Activated CD4-positive, alpha-beta memory T cell treated with anti-CD3 and anti-CD28 coated beads, Interleukin-2, amount 10 ng/mL, durations not matched to agents 7 days and 5 days (primary cell): ENCODE measurements at regions of chr19 and their contacts with region 1.

Region 1: DNA sequence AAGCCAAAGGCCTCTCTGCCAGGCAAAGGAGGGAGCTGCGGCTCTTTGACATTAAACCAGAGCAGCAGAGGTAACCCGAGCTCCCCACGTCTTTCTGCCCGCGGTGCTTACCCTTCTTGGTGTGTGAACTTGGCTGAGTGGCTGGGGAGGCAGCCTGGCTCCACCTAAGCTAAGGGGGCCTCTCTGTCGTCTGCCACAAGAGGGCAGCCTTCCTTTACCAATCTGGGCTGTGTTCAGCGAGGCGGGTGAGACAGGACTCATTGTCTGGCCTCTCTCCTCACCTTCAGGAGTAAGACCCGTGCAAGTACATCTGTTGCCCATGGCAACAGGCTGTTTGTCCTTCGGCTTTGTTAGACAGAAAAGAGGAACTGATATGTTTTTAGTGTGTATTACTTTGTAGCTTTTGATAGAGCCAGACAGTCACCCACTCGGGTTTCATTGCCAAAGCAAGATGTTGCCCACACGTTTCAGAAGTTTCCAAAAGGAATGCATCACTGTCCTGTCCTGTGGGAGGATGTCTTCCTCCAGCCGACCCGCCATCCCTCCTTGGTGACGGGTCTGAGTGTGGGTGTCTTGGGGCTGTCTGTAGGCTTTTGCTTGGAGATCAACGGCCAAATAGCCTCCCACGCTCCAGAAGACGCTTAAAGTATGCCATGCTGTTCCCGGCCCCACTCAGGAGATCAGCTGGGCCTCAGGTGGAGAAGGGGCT is 4.6 kb downstream of the POP4 start:
- DNase-seq: peak; percentile 88
- H3K4me3 Mint-ChIP-seq: no peak overlapping the region
- H3K27ac Mint-ChIP-seq: peak overlapping the region; percentile 9
- H3K4me1 Mint-ChIP-seq: peaks cover 37% of the 10 kb centered on the region
- H3K27me3 Mint-ChIP-seq: no peaks in the 10 kb centered on the region

Region 2: GRCh38 chr19:29520390-29520789 is 90.3 kb before region 1 on chr19:
- CTCF ChIA-PET with region 1: no interaction called
- POLR2A ChIA-PET with region 1: no interaction called
- DNase-seq: no peak
- H3K4me3 Mint-ChIP-seq: no peak overlapping the region
- H3K27ac Mint-ChIP-seq: no peak overlapping the region
- H3K4me1 Mint-ChIP-seq: peaks cover 2% of the 10 kb centered on the region
- H3K27me3 Mint-ChIP-seq: peaks cover 32% of the 10 kb centered on the region

Region 3: GRCh38 chr19:29596080-29596727 is 14.5 kb before region 1 on chr19:
- CTCF ChIA-PET with region 1: interaction called, 4 read pairs
- POLR2A ChIA-PET with region 1: interaction called, 10 read pairs
- DNase-seq: no peak
- H3K4me3 Mint-ChIP-seq: no peak overlapping the region
- H3K27ac Mint-ChIP-seq: no peak overlapping the region
- H3K4me1 Mint-ChIP-seq: no peaks in the 10 kb centered on the region
- H3K27me3 Mint-ChIP-seq: peaks cover 41% of the 10 kb centered on the region

Region 4: DNA sequence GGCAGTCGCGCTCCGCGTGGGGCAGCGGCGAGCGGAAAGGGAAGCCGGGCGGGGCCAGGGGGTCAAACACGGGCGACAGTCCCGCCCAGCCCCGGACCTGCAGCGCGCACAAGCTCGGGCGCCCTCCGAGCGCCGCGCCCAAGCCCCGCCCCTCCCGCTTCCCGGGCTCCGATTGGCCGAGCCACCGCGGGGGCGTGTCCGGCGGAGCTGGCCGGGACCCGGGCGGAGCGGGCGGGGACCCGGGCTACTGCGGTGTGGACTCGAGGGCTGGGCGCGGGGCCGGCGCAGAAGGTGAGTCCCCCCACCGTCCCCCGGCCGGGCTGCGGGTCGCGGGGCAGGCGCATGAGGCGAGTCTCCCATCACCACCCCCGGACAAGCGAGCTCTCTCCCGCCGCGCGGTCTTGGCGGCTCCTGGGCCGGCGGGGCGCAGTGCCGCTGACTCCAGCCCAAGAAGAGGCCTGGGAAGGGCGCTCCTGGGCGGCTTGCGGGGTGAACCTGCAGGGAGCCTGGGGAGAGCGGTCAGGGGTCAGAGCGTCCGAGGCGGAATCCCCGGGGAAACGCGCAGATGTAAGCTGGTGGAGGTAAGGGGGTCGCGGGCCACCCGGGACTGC is 54.6 kb after region 1 on chr19 and contains the start of gene PLEKHF1:
- CTCF ChIA-PET with region 1: interaction called, 64 read pairs
- POLR2A ChIA-PET with region 1: interaction called, 69 read pairs
- DNase-seq: peak; percentile 90
- H3K4me3 Mint-ChIP-seq: peak within 1 kb of the TSS; percentile 94
- H3K27ac Mint-ChIP-seq: peak within 1 kb of the TSS; percentile 97
- H3K4me1 Mint-ChIP-seq: peaks cover 63% of the 10 kb centered on the region
- H3K27me3 Mint-ChIP-seq: peaks cover 1% of the 10 kb centered on the region
- total RNA-seq, gene PLEKHF1: 53.1 to 53.9 TPM

Region 5: GRCh38 chr19:29680447-29680846 is 69.7 kb after region 1 on chr19:
- CTCF ChIA-PET with region 1: interaction called, 9 read pairs
- POLR2A ChIA-PET with region 1: interaction called, 16 read pairs
- DNase-seq: peak; percentile 93
- H3K4me3 Mint-ChIP-seq: peak overlapping the region; percentile 56
- H3K27ac Mint-ChIP-seq: peak overlapping the region; percentile 88
- H3K4me1 Mint-ChIP-seq: peaks cover 63% of the 10 kb centered on the region
- H3K27me3 Mint-ChIP-seq: no peaks in the 10 kb centered on the region

Region 6: DNA sequence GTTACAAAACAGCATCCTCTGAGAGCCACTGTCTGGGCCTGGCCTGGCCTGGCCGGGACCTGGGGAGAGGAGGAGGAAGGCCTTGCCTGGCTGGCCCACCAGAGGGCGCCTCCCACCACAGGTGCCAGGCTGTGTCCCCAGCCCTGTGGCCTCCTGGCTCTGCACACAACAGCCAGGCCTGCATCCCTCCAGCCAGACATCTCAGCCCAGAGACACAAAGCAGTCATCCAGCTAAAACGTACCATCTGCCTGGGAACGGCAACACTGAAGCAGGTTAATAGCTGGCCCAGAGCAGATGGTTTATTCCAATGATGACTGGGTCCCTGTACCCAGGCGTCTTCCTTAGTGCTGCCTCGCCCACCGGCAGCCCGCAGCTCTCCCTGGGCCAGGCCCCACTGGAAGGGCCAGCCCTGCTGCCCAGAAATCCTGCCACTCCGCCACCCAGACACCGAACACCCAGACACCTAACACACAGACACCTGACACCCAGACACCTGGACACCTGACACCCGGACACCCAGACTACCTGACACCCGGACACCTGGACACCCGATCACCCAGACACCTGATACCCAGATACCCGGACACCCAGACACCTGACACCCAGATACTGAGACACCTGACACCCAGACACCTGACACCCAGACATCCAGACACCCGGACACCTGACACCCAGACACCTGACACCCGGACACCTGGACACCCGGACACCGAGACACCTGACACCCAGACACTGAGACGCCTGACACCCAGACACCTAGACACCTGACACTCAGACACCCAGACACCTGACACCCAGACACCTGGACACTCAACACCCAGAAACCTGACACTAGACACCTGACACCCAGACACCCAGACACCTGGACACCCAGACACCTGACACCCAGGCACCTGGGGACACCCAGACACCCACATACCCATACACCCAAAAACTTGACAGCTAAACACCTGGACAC is 84.2 kb after region 1 on chr19:
- CTCF ChIA-PET with region 1: interaction called, 97 read pairs
- POLR2A ChIA-PET with region 1: interaction called, 8 read pairs
- DNase-seq: peak; percentile 85
- H3K4me3 Mint-ChIP-seq: no peak overlapping the region
- H3K27ac Mint-ChIP-seq: peak overlapping the region; percentile 49
- H3K4me1 Mint-ChIP-seq: peaks cover 19% of the 10 kb centered on the region
- H3K27me3 Mint-ChIP-seq: no peaks in the 10 kb centered on the region